ENCODE measurements at regions of chr1 and their contacts with region 1.

Region 1: GRCh38 chr1:214537219-214537618 is 14.2 kb downstream of the PTPN14 start:
- DNase-seq: no peak
- H3K4me3 ChIP-seq: no peak overlapping the region
- H3K27ac ChIP-seq: no peak overlapping the region
- H3K27me3 ChIP-seq: no peaks in the 10 kb centered on the region
- CTCF ChIP-seq: no peak

Region 2: DNA sequence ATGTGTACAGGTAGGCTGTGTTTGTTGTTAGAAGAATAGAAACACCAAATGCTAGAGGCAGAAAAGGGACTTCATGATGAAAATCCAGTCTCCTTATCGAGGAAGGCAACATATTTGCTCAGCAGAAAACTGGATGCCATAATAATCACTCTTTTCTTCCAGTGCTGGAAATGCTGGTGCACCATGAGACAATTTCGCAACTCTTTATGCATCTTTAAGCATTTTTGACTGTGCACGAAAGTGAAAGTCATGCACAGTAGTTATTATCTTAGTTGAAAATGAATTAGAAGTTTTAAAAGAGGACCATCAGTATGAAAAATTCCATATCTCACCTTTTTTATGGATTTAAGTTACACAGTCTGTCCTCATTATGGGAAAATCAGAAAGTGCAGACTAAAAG is 227.2 kb before region 1 on chr1:
- CTCF ChIA-PET with region 1: no interaction called
- POLR2A ChIA-PET with region 1: no interaction called
- DNase-seq: no peak
- H3K4me3 ChIP-seq: no peak overlapping the region
- H3K27ac ChIP-seq: no peak overlapping the region
- H3K27me3 ChIP-seq: no peaks in the 10 kb centered on the region
- CTCF ChIP-seq: no peak

Region 3: GRCh38 chr1:214520590-214521037 is 16.6 kb before region 1 on chr1:
- CTCF ChIA-PET with region 1: no interaction called
- POLR2A ChIA-PET with region 1: no interaction called
- DNase-seq: no peak
- H3K4me3 ChIP-seq: no peak overlapping the region
- H3K27ac ChIP-seq: no peak overlapping the region
- H3K27me3 ChIP-seq: no peaks in the 10 kb centered on the region
- CTCF ChIP-seq: no peak

Region 4: DNA sequence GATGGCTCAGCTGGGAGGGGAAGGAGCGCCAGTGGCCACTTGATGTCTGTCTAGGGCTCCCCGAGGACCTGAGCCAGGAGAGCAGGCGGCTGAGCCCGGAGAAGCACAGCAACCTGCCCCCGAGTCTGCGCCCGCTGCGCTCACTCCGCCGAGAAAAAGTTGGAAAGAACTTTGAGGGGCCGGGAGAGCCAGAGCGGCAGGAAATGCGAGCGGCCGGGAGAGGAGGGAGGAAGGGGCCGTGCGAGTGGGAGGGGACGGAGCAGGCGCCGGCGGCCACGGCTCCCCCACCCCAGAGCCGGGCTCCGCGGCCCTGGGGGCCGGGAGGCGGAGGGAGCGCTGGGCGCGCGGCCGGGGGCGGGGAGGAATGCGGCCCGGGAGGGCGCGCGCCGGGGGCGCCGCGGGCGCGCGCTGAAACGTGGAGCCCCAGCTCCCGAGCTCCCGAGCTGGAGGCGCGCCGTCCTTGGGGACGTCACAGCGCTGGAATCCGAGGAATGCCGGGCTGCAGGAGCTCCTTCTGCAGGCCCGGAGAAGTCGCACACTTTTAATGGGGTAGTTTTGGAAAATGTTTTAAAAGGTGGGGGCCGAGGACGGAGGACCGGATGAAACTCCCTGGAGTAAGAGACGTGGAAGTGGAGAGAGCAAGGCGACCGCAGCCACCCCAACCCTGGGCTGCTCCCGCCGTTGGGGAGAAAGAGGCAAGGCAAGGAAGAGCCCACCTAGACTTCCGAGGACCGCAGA is 14.4 kb after region 1 on chr1 and contains the start of gene PTPN14:
- CTCF ChIA-PET with region 1: interaction called, 15 read pairs
- POLR2A ChIA-PET with region 1: interaction called, 4 read pairs
- DNase-seq: peak; percentile 87
- H3K4me3 ChIP-seq: peak within 1 kb of the TSS; percentile 96
- H3K27ac ChIP-seq: peak within 1 kb of the TSS; percentile 99
- H3K27me3 ChIP-seq: no peaks in the 10 kb centered on the region
- CTCF ChIP-seq: peak; percentile 51
- polyA plus RNA-seq, gene PTPN14: 30.3 and 34.2 TPM in 2 replicates

Region 5: GRCh38 chr1:214574702-214575411 is 37.6 kb after region 1 on chr1:
- CTCF ChIA-PET with region 1: no interaction called
- POLR2A ChIA-PET with region 1: no interaction called
- DNase-seq: no peak
- H3K4me3 ChIP-seq: no peak overlapping the region
- H3K27ac ChIP-seq: no peak overlapping the region
- H3K27me3 ChIP-seq: no peaks in the 10 kb centered on the region
- CTCF ChIP-seq: no peak